Activated B cell treated with CpG ODN at 0.5 μM for 24 hours (primary cell): ENCODE measurements at regions of chr16 and their contacts with region 1.

Region 1: DNA sequence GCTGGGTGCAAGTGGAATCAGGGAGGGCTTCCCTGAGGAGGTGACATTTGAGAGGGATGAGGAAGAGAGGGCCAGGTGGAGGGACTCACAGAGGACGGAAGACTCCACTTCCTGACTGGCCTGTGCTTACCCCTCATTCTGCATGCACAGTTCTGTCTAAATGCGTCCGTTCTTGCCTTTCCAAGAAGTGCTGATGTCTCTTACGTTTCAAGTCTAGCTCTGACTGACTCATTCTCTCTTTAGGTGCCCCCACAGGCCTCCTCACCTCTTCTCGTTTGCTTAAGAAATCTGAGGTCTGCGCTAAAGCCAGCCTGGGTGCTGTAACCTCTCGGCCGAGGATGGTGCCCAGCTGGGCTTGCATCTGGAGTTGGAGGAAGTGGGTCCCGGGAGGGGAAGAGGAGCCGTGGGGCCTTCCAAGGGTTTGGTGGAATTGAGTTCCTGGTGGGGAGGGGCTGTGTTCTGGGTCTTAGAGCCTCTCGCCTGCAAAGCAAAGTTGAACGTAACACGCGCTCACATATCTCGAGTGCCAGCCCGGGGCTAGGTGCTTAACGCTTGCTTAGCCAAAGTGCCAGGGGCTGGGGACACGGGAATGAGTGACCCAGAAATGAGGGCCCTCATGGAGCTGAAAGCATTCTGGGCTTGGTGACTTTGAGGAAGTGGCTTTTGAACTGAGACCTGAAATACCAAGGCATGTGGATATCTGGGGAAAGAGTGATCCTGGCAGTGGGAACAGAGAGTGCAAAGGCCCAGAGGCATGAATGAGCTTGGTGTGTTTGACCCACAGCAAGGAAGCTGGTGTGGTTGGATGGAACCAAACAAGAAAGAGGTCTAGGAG is 4.8 kb downstream of the IL4R start:
- DNase-seq: peak; percentile 43
- ATAC-seq: peak; percentile 72
- H3K4me3 Mint-ChIP-seq: peak overlapping the region; percentile 88
- H3K27ac Mint-ChIP-seq: peak overlapping the region; percentile 90
- H3K4me1 Mint-ChIP-seq: peaks cover 90% of the 10 kb centered on the region
- H3K27me3 Mint-ChIP-seq: no peaks in the 10 kb centered on the region
- CTCF ChIP-seq: no peak

Region 2: DNA sequence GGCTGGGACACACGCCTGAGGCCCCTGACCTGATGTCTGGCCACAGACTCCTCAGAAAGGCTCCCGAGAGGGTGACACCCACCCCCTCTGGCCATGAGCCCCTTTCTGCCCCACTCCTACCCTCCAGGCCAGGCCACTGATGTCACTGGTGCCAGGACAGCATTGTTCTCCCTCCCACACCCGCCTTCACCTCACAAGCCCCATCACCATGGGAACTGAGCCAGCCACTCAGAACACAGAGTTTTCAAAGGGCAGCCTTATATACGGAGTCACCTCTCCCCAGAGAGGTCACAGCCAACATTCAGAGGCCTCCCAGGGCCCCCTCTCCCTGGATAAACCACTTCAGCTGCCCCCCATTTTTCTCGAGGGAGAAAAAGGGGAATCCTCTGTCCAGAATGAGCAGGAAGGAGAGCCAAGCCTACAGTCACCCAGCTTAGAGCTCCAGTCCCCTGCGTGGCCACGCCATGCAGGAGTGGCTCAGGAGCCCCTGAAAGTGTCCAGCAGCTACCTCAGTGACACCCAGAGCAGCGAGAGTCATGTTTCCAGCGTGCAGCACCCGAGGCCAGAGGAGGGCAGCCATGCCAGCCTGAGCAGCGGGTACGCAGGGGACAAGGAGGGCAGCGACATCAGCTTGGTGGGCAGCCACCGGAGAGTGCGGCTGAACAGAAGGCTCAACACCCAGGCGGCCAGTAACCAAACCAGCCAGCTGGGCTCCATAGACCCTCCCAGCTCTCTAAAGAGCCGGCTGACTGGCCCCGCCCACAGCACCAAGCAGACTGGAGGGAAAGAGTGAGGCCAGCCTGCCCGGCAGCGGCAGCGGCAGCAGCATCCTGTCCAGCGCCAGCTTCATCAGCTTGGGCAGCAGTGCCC is 251.7 kb before region 1 on chr16 and contains the start of gene C16orf82:
- CTCF ChIA-PET with region 1: no interaction called
- POLR2A ChIA-PET with region 1: no interaction called
- intact Hi-C with region 1: no loop called
- DNase-seq: no peak
- ATAC-seq: no peak
- H3K4me3 Mint-ChIP-seq: no peak within 1 kb of the TSS
- H3K27ac Mint-ChIP-seq: no peak within 1 kb of the TSS
- H3K4me1 Mint-ChIP-seq: no peaks in the 10 kb centered on the region
- H3K27me3 Mint-ChIP-seq: peaks cover 27% of the 10 kb centered on the region
- CTCF ChIP-seq: no peak
- total RNA-seq, gene C16orf82: not detected in 2 replicates

Region 3: GRCh38 chr16:27179500-27180072 is 139.0 kb before region 1 on chr16:
- CTCF ChIA-PET with region 1: interaction called, 4 read pairs
- POLR2A ChIA-PET with region 1: interaction called, 3 read pairs
- intact Hi-C with region 1: loop called (anchors 2 kb)
- DNase-seq: peak; percentile 73
- ATAC-seq: peak; percentile 99
- H3K4me3 Mint-ChIP-seq: no peak overlapping the region
- H3K27ac Mint-ChIP-seq: peak overlapping the region; percentile 5
- H3K4me1 Mint-ChIP-seq: peaks cover 28% of the 10 kb centered on the region
- H3K27me3 Mint-ChIP-seq: no peaks in the 10 kb centered on the region
- CTCF ChIP-seq: peak; percentile 49

Region 4: DNA sequence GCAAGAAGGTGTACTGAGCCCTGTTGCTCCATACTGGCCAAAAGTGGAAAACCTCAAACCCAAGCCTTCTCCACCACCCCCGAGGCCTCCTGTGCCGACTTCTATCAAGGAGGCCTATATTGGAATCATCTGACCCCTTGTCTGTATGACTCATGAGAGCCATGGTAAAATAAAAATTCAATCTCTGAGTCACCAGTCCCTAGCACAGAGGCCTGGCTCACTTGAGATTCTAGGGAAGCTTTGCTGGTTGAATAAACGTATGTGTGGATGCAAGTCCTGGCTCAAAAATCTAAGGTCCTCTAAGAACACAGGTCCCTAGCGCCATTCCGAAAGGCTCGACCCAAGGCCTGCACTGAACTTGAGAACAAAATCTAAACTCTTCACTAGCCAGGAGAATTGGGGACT is 65.1 kb before region 1 on chr16:
- CTCF ChIA-PET with region 1: interaction called, 3 read pairs
- POLR2A ChIA-PET with region 1: interaction called, 13 read pairs
- intact Hi-C with region 1: loop called (anchors 5 kb)
- DNase-seq: no peak
- ATAC-seq: peak; percentile 40
- H3K4me3 Mint-ChIP-seq: peak overlapping the region; percentile 65
- H3K27ac Mint-ChIP-seq: peak overlapping the region; percentile 88
- H3K4me1 Mint-ChIP-seq: peaks cover 65% of the 10 kb centered on the region
- H3K27me3 Mint-ChIP-seq: no peaks in the 10 kb centered on the region
- CTCF ChIP-seq: no peak

Region 5: GRCh38 chr16:27301236-27301861 is 17.3 kb before region 1 on chr16:
- CTCF ChIA-PET with region 1: no interaction called
- POLR2A ChIA-PET with region 1: interaction called, 12 read pairs
- intact Hi-C with region 1: loop called (anchors 2 kb)
- DNase-seq: no peak
- ATAC-seq: no peak
- H3K4me3 Mint-ChIP-seq: no peak overlapping the region
- H3K27ac Mint-ChIP-seq: peak overlapping the region; percentile 42
- H3K4me1 Mint-ChIP-seq: peaks cover 88% of the 10 kb centered on the region
- H3K27me3 Mint-ChIP-seq: no peaks in the 10 kb centered on the region
- CTCF ChIP-seq: no peak

Region 6: GRCh38 chr16:27332105-27332504 is 13.5 kb after region 1 on chr16:
- CTCF ChIA-PET with region 1: no interaction called
- POLR2A ChIA-PET with region 1: interaction called, 4 read pairs
- intact Hi-C with region 1: loop called (anchors 2 kb)
- DNase-seq: no peak
- ATAC-seq: no peak
- H3K4me3 Mint-ChIP-seq: no peak overlapping the region
- H3K27ac Mint-ChIP-seq: no peak overlapping the region
- H3K4me1 Mint-ChIP-seq: peaks cover 57% of the 10 kb centered on the region
- H3K27me3 Mint-ChIP-seq: no peaks in the 10 kb centered on the region
- CTCF ChIP-seq: no peak

Region 7: GRCh38 chr16:27374804-27375425 is 56.3 kb after region 1 on chr16:
- CTCF ChIA-PET with region 1: no interaction called
- POLR2A ChIA-PET with region 1: interaction called, 27 read pairs
- intact Hi-C with region 1: no loop called
- DNase-seq: no peak
- ATAC-seq: peak; percentile 35
- H3K4me3 Mint-ChIP-seq: no peak overlapping the region
- H3K27ac Mint-ChIP-seq: no peak overlapping the region
- H3K4me1 Mint-ChIP-seq: peaks cover 48% of the 10 kb centered on the region
- H3K27me3 Mint-ChIP-seq: no peaks in the 10 kb centered on the region
- CTCF ChIP-seq: no peak

Region 8: DNA sequence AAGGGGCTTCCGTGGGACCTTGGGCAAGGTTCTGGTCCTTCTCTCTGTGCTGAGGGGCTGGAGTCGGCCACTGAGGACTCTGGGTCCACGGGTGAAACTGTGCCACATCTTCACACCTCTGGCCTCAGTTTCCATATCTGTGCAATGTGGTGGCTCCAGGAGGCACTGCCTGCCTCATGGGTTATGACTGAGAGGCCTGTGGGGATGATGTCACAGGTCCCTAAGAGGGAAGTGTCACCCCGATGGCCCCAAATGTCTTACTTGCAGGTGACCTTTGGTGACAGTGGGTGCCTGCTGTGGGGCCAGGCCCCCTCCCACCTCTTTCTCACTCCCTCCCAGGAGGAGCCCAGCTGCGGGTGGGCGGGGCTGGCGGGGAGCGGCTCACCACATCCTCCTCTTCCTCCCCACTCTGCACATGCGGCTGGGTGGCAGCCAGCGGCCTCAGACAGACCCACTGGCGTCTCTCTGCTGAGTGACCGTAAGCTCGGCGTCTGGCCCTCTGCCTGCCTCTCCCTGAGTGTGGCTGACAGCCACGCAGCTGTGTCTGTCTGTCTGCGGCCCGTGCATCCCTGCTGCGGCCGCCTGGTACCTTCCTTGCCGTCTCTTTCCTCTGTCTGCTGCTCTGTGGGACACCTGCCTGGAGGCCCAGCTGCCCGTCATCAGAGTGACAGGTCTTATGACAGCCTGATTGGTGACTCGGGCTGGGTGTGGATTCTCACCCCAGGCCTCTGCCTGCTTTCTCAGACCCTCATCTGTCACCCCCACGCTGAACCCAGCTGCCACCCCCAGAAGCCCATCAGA is 83.4 kb after region 1 on chr16 and contains the start of gene IL21R:
- CTCF ChIA-PET with region 1: interaction called, 4 read pairs
- POLR2A ChIA-PET with region 1: interaction called, 7 read pairs
- intact Hi-C with region 1: loop called (anchors 2 kb)
- DNase-seq: peak; percentile 76
- ATAC-seq: peak; percentile 53
- H3K4me3 Mint-ChIP-seq: peak within 1 kb of the TSS; percentile 99
- H3K27ac Mint-ChIP-seq: peak within 1 kb of the TSS; percentile 96
- H3K4me1 Mint-ChIP-seq: peaks cover 88% of the 10 kb centered on the region
- H3K27me3 Mint-ChIP-seq: no peaks in the 10 kb centered on the region
- CTCF ChIP-seq: no peak
- total RNA-seq, gene IL21R: 144 and 167 TPM in 2 replicates